Sigmoid colon (tissue), 7 donors: ENCODE measurements at regions of chr10 and their contacts with region 1.

Region 1: GRCh38 chr10:67666416-67667034 is 29.5 kb downstream of the CTNNA3 start:
- DNase-seq: no peak
- H3K4me3 ChIP-seq: no peak overlapping the region
- H3K27ac ChIP-seq: no peak overlapping the region
- H3K4me1 ChIP-seq: peaks cover 3 to 46% (median 21%) of the 10 kb centered on the region in 4 donors
- H3K27me3 ChIP-seq: no peaks in the 10 kb centered on the region
- CTCF ChIP-seq: peak; percentile 36 to 57 (median 50)
- EP300 ChIP-seq: no peak
- POLR2A ChIP-seq: no peak

Region 2: DNA sequence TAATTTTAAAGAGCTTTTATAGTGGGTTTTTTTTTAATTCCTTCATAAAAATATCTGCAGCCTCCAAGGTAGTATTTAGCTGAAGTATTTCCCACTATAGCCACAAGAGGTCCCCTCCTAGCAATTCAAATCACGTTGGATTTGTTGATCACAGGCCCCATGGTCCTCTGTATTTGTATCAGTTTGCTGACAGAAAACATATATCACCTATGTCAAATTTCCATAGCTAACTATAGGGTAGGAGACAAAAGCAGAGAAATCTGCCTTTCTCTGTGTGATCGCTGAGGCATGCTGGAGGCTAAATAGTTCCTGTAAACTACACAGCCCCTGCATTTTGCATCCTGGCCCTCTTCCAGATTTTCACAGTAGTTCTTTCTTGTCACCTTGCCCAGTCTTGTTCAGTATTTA is 31.2 kb after region 1 on chr10:
- intact Hi-C with region 1: loop called (anchors 2 kb)
- DNase-seq: no peak
- H3K4me3 ChIP-seq: no peak overlapping the region
- H3K27ac ChIP-seq: no peak overlapping the region
- H3K4me1 ChIP-seq: peaks cover 0 to 32% (median 18%) of the 10 kb centered on the region in 4 donors
- H3K27me3 ChIP-seq: no peaks in the 10 kb centered on the region
- CTCF ChIP-seq: peak in 3 of 4 experiments; percentile 41 to 67 (median 47)
- EP300 ChIP-seq: no peak
- POLR2A ChIP-seq: no peak

Region 3: DNA sequence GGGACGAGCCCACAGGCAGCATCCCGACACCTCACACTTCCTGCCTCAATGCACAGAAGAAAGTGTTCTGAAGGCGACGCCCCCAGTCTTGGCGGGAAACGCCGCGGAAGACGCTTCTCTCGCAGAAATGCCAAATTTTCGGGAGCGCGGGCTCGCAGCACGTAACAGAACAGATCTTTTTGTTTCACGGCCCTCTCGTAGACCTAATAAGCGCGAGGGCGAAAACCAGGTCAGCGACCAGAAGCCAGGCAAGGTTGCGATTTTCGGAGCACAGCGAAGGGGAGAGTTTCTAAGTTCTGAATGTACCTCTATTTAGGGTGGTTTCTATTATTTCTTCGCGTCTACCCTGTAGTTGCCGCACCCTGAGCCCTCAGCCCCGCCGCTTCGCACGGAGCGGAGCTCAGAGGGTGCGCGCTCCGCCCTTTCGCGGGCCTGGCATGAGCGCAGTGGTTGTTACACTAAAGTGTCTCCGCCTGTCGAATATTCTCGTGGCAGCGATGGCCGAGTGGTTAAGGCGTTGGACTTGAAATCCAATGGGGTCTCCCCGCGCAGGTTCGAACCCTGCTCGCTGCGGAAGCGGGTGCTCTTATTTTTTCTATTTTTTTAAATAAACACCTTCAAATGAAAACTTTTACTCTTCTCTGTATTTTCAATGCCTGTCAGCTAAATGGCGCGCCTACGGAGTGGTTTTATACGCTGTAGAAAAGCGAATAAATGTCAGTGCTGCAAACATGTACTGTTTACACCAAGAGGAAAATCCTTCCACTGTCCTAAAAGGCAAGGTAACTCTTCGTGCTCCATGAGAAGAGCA is 97.7 kb after region 1 on chr10:
- intact Hi-C with region 1: loop called (anchors 5 kb)
- DNase-seq: peak; percentile 97
- H3K4me3 ChIP-seq: peak overlapping the region; percentile 59 to 72 (median 66)
- H3K27ac ChIP-seq: peak overlapping the region; percentile 91 to 96 (median 94)
- H3K4me1 ChIP-seq: peaks cover 0 to 4% (median 0%) of the 10 kb centered on the region in 4 donors
- H3K27me3 ChIP-seq: no peaks in the 10 kb centered on the region
- CTCF ChIP-seq: no peak
- EP300 ChIP-seq: peak in 1 of 4 donors; percentile 1
- POLR2A ChIP-seq: no peak

Region 4: GRCh38 chr10:67779465-67780203 is 113.1 kb after region 1 on chr10:
- intact Hi-C with region 1: loop called (anchors 2 kb)
- DNase-seq: peak; percentile 77
- H3K4me3 ChIP-seq: peak overlapping the region in 1 of 4 donors; percentile 14
- H3K27ac ChIP-seq: peak overlapping the region in 1 of 4 donors; percentile 2
- H3K4me1 ChIP-seq: peaks cover 0 to 11% (median 4%) of the 10 kb centered on the region in 4 donors
- H3K27me3 ChIP-seq: no peaks in the 10 kb centered on the region
- CTCF ChIP-seq: peak; percentile 74 to 83 (median 79)
- EP300 ChIP-seq: no peak
- POLR2A ChIP-seq: no peak

Region 5: GRCh38 chr10:68082872-68083271 is 416.3 kb after region 1 on chr10:
- intact Hi-C with region 1: no loop called
- DNase-seq: no peak
- H3K4me3 ChIP-seq: no peak overlapping the region
- H3K27ac ChIP-seq: no peak overlapping the region
- H3K4me1 ChIP-seq: no peaks in the 10 kb centered on the region
- H3K27me3 ChIP-seq: no peaks in the 10 kb centered on the region
- CTCF ChIP-seq: peak in 2 of 4 experiments; percentile 24 to 25
- EP300 ChIP-seq: no peak
- POLR2A ChIP-seq: no peak

Region 6: DNA sequence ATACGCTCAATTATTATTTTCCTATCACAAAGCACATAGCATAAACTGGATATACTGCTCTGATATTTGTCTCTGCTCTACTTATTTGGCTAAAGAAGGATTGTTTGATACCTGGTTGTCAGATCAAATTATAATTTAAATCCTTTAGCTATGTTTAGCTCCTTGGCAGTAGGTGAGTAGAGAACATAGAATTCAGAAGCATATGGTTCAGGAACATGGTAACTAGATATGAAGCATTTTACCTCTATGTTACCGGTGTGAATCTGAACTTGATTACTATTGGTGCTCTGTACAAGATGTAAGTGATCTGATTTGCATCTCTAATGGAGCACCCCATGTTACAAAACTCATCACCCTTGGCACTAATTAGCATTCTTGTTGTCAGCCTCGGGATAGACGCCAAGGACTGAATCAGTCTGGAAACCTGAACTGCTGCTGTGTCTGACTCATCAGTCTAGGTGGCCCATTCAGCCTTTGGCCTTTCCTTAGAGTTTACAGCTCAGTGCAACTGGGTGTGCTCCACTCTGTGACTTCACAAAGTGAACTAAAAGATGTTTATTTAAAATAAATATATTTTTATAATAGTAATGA is 430.5 kb after region 1 on chr10:
- intact Hi-C with region 1: no loop called
- DNase-seq: no peak
- H3K4me3 ChIP-seq: no peak overlapping the region
- H3K27ac ChIP-seq: no peak overlapping the region
- H3K4me1 ChIP-seq: peaks cover 0 to 14% (median 3%) of the 10 kb centered on the region in 4 donors
- H3K27me3 ChIP-seq: no peaks in the 10 kb centered on the region
- CTCF ChIP-seq: no peak
- EP300 ChIP-seq: no peak
- POLR2A ChIP-seq: no peak